Panc1 (cell line): ENCODE measurements at regions of chr6 and their contacts with region 1.

Region 1: DNA sequence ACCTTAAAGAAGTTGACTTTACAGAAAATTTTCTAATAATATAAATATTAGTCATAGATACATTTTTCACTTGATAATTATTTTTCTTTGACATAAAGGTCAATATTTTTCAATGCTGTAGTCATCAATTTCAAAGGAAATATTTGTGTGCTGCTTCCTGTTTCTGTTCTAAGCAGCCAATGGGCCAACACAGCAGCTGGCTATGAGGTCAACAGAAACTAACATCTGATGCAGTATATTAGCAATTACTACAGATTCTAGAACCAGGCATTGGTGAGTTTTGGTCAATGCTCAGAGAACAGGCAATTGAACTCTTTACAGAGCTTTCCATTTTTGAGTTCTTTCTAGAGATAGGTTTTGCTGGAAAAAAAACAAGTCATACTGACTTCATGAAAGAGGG is 669.6 kb upstream of the NRSN1 start:
- DNase-seq: no peak
- ATAC-seq: no peak
- H3K4me3 ChIP-seq: no peak overlapping the region
- H3K27ac ChIP-seq: no peak overlapping the region
- H3K4me1 ChIP-seq: no peaks in the 10 kb centered on the region
- H3K27me3 ChIP-seq: no peaks in the 10 kb centered on the region
- CTCF ChIP-seq: no peak

Region 2: DNA sequence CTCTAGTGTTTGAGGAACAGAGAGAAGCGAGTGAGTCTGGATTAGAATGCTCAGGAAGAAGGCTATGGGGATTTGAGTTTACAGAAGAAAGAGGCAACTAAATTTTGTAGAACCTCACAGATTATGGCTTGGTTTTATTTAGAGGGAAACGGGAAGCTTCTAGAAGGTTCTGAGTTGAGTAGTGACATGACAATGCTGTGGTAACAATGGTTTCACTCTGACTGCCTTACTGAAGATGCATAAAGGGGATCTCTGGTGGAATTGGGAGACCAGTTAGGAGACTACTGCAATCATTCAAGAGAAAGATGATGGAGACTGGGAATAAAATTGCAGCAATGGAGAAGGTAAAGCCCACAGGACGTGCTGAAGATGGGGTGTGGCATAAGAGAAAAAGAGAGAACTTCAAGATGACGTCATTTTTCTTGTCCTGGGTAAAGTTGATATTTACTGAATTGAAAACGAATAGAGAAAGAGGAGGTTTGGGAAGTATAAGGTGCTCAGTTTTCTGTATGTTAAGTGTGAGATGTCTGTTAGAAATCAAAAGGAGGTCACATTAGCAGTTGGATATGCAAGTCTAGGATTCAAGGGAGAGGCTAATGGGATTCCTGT is 40.5 kb before region 1 on chr6:
- CTCF ChIA-PET with region 1: no interaction called
- POLR2A ChIA-PET with region 1: interaction called, 10 read pairs
- in situ Hi-C with region 1: no loop called
- intact Hi-C with region 1: no loop called
- DNase-seq: no peak
- ATAC-seq: no peak
- H3K4me3 ChIP-seq: no peak overlapping the region
- H3K27ac ChIP-seq: no peak overlapping the region
- H3K4me1 ChIP-seq: no peaks in the 10 kb centered on the region
- H3K27me3 ChIP-seq: no peaks in the 10 kb centered on the region
- CTCF ChIP-seq: no peak

Region 3: DNA sequence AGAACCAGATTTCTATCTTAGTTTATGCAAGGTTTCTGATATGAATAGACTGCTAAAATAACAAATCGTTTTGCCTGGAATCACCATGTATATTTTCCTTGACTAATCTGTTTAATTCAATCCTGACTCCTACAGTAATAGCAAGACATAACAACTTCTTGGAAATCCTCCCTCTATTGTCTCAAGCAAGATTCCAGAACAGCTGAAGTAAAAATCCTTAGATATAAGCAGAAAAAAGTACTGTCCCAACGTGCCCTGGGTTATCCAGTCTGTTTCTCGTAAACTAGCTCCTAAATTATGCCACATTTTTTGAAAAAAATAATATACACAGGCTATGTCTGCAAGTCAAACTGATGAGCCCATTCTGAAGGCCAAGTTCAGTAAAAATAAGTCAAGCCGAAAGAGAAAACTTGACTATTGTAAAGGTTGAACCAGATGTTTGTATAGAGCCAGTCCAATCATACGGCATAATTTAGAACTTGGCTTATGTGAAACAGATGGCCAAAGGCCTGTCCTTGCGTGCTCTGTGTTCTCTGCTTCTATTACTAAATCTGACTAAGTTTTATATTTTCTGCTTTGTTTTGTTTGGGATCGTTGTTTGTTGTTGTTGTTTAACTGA is 328.0 kb after region 1 on chr6:
- CTCF ChIA-PET with region 1: no interaction called
- POLR2A ChIA-PET with region 1: no interaction called
- in situ Hi-C with region 1: no loop called
- intact Hi-C with region 1: no loop called
- DNase-seq: no peak
- ATAC-seq: no peak
- H3K4me3 ChIP-seq: no peak overlapping the region
- H3K27ac ChIP-seq: no peak overlapping the region
- H3K4me1 ChIP-seq: no peaks in the 10 kb centered on the region
- H3K27me3 ChIP-seq: no peaks in the 10 kb centered on the region
- CTCF ChIP-seq: no peak